ENCODE measurements at regions of chr2 and their contacts with region 1.

Region 1: GRCh38 chr2:41782306-41783158 is 265.3 kb upstream of the PKDCC start:
- DNase-seq: peak; percentile 30
- H3K4me3 Mint-ChIP-seq: no peak overlapping the region
- H3K27ac Mint-ChIP-seq: no peak overlapping the region
- H3K4me1 Mint-ChIP-seq: no peaks in the 10 kb centered on the region
- H3K27me3 Mint-ChIP-seq: peaks cover 1% of the 10 kb centered on the region

Region 2: DNA sequence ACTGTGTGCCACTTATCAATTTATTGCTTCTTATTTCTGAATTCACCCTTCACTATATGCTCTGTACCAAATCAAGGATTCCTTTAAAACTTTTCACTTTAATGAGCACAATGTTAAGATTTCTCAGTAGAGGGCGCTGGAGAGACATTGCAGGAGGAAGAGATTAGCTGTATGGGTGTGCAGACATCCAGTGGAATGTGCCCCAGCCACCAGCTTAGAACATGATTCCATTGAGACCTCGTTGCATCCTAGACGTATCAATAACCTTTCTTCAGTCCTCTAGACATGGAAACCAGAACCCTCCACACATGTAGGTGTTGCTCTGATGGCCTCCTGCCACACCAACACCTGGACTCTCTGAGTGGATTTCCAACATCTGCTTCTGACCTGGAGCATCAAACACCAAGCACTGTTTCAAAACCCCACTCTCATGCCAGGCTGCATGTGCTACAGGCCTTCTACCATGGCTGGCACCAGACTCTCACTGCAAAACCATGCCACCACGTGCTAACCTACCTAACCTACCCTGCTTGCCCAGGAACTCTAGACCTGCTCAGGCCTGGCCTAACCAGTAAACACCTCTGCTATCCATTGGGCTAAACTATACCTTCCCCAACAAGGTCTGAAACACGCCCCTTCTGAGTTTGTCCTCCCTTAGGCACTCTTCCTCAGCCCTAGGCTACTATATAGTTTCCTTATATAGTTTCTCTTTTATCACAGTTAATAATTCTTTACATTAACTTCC is 367.9 kb before region 1 on chr2:
- CTCF ChIA-PET with region 1: no interaction called
- POLR2A ChIA-PET with region 1: no interaction called
- intact Hi-C with region 1: loop called (anchors 5 kb)
- DNase-seq: no peak
- H3K4me3 Mint-ChIP-seq: no peak overlapping the region
- H3K27ac Mint-ChIP-seq: no peak overlapping the region
- H3K4me1 Mint-ChIP-seq: no peaks in the 10 kb centered on the region
- H3K27me3 Mint-ChIP-seq: no peaks in the 10 kb centered on the region

Region 3: DNA sequence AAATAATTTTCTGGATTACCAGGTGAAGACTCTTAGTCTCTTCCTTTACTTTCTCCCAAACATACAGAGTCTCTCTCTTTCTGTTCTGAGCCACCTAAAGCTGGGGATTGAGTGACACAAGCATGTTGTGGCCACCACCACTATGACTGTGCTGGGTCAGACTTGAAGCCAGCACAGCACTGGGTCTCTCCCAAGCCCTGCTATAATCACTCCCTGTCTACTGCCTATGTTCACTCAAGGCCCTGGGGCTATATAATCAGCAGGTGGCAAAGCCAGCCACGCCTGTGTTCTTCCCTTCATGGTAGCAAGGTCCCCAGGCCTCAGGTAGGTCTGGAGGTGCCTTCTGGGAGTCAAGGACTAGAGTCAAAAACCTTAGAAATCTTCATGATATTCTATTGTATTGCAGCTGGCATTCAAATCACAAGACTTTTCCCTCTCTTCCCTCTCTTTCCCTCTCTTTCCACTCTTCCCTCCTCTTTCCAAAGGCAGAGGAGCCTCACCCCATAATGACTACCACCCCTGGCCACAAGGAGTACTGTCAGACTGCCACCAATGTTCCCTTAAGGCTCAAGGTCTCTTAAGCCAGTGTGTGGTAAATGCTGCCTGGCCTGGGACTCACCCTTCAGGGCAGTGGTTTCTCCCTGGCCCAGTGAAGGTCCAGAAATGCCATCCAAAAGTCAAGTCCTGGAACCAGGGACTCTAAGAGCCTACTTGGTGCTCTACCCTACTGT is 340.7 kb before region 1 on chr2:
- CTCF ChIA-PET with region 1: no interaction called
- POLR2A ChIA-PET with region 1: no interaction called
- intact Hi-C with region 1: no loop called
- DNase-seq: no peak
- H3K4me3 Mint-ChIP-seq: no peak overlapping the region
- H3K27ac Mint-ChIP-seq: no peak overlapping the region
- H3K4me1 Mint-ChIP-seq: no peaks in the 10 kb centered on the region
- H3K27me3 Mint-ChIP-seq: no peaks in the 10 kb centered on the region

Region 4: GRCh38 chr2:41610501-41611190 is 171.9 kb before region 1 on chr2:
- CTCF ChIA-PET with region 1: no interaction called
- POLR2A ChIA-PET with region 1: no interaction called
- intact Hi-C with region 1: loop called (anchors 10 kb)
- DNase-seq: no peak
- H3K4me3 Mint-ChIP-seq: no peak overlapping the region
- H3K27ac Mint-ChIP-seq: no peak overlapping the region
- H3K4me1 Mint-ChIP-seq: no peaks in the 10 kb centered on the region
- H3K27me3 Mint-ChIP-seq: peaks cover 1% of the 10 kb centered on the region

Region 5: GRCh38 chr2:42249887-42250286 is 467.4 kb after region 1 on chr2:
- CTCF ChIA-PET with region 1: no interaction called
- POLR2A ChIA-PET with region 1: no interaction called
- intact Hi-C with region 1: no loop called
- DNase-seq: no peak
- H3K4me3 Mint-ChIP-seq: no peak overlapping the region
- H3K27ac Mint-ChIP-seq: no peak overlapping the region
- H3K4me1 Mint-ChIP-seq: peaks cover 49% of the 10 kb centered on the region
- H3K27me3 Mint-ChIP-seq: no peaks in the 10 kb centered on the region

Region 6: GRCh38 chr2:43426305-43427031 is 1643.9 kb after region 1 on chr2:
- CTCF ChIA-PET with region 1: no interaction called
- POLR2A ChIA-PET with region 1: no interaction called
- intact Hi-C with region 1: no loop called
- DNase-seq: peak; percentile 83
- H3K4me3 Mint-ChIP-seq: no peak overlapping the region
- H3K27ac Mint-ChIP-seq: peak overlapping the region; percentile 19
- H3K4me1 Mint-ChIP-seq: peaks cover 37% of the 10 kb centered on the region
- H3K27me3 Mint-ChIP-seq: no peaks in the 10 kb centered on the region

Measured in activated CD4-positive, alpha-beta memory T cell treated with anti-CD3 and anti-CD28 coated beads for 36 hours (primary cell).